ENCODE measurements at regions of chr11 and their contacts with region 1.

Region 1: DNA sequence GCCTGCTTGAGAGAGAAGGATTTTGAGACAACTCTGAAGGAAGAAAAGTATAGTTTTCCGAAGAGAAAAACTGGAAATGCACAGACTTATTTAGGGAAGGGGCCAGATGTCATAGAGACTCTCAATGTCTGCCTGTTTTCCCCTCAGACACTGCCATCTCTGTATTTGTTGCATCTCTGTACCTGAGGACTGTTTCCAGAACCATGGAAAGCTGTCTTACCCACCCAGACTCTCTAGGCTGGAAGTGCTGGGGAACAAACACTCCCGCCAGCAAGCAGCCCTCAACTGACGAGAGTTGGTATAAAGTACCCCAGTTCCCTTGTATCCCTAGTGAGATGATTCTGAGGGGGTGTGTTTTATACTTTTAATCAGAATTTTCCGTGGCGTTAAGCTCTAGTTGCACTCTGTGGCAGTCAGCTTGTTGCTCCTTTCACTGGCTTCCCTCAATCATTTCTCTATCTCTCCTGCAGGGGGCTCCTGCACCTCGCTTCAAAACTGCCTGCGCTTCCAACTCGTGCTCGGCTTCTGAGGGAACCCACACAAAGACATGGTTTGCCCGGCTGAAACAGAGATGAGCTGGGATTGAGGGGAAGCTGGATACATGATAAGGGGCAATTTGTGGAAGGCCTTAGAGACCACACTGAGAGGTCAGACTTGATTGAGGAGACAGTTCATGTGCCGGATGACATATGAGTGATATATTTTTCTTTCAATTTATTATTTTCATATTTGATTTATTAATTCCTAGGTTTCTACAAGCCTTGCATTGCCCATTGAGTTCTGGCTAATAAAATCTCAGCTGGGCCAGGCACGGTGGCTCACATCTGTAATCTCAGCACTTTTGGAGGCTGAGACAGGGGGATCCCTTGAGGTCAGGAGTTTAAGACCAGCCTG is 36.9 kb upstream of the CLPB start:
- DNase-seq: peak; percentile 84
- ATAC-seq: peak; percentile 98
- H3K4me3 ChIP-seq: no peak overlapping the region
- H3K27ac ChIP-seq: no peak overlapping the region
- H3K4me1 ChIP-seq: no peaks in the 10 kb centered on the region
- H3K27me3 ChIP-seq: peaks cover 33% of the 10 kb centered on the region
- CTCF ChIP-seq: peak; percentile 95

Region 2: DNA sequence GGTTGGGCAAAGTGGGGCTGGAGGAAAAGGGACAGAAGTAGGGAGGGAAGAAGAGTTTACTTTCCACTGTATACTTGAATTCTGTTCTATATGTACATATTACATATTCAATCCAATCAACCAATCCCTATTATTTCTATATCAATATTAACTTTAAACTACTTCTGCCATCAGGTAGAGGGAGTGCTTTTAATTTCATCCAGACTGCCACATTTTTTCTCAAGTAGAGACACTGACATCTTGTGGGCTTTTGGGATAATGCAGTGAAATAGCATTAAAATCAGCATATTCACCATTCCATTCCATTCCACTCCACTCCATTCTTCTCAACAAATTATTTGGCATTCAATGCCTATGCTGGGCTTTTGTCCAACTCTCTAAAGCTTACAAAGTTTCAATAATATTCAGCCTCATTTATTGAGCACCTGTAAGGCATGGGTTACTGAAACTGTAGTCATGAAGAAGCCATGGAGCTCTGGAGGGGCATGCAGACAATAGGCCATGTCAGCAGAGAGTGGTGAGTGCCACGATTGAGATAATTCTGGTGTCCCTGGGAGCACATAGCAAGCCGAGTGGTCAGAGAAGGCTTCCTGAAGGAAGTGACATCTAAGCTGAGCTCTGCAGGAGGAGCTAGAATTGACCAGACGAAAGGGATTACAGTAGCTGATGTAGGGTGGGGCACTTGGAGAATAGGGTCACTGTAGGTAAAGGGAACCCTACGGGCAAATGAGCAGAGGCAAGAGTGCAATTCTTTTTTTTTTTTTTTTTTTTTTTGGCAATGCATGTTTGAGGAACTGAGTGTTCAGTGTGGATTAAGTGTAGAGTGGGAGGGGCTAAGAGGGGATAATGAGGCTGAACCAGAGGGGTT is 24.1 kb before region 1 on chr11:
- CTCF ChIA-PET with region 1: interaction called, 11 read pairs
- POLR2A ChIA-PET with region 1: no interaction called
- intact Hi-C with region 1: no loop called
- DNase-seq: peak; percentile 83
- ATAC-seq: peak; percentile 76
- H3K4me3 ChIP-seq: no peak overlapping the region
- H3K27ac ChIP-seq: no peak overlapping the region
- H3K4me1 ChIP-seq: no peaks in the 10 kb centered on the region
- H3K27me3 ChIP-seq: no peaks in the 10 kb centered on the region
- CTCF ChIP-seq: peak; percentile 95

Region 3: GRCh38 chr11:72507050-72507449 is 35.8 kb after region 1 on chr11:
- CTCF ChIA-PET with region 1: no interaction called
- POLR2A ChIA-PET with region 1: no interaction called
- intact Hi-C with region 1: no loop called
- DNase-seq: no peak
- ATAC-seq: no peak
- H3K4me3 ChIP-seq: no peak overlapping the region
- H3K27ac ChIP-seq: no peak overlapping the region
- H3K4me1 ChIP-seq: no peaks in the 10 kb centered on the region
- H3K27me3 ChIP-seq: 0 out of 2 replicates have a peak, but pooled peaks cover 4% of the 10 kb centered on the region
- CTCF ChIP-seq: no peak

Region 4: DNA sequence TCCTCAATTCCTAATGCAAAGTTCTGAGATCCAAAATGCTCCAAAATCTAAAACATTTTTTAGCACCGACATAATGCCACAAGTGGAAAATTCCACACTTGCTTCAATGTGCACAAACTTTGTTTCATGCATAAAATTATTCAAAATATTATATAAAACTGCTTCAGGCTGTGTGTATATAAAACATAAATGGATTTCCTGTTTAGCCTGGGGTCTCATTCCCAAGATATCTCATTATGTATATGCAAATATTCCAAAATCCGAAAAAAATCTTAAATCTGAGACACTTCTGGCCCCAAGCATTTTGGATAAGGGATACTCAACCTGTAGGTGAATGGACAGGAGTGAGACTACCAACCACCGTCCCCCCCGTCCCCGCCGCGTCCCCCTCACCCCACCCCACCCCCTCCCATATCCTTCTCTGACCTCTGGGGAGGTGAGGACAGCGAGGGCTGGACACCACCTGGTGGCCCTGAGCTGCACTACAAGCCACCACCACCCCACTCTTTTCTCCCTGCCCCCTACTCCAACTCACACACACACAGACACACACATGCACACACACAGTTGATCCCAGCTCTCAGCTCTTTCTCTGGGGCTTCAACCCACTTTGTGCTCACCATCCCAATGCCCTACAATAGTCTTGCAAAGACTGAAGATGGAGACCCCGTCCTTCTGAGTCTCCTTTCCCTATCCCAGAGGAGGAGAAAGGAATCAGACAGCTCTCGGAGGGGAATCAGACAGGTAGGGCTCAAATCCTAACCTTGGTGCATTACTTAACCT is 102.0 kb after region 1 on chr11:
- CTCF ChIA-PET with region 1: interaction called, 39 read pairs
- POLR2A ChIA-PET with region 1: no interaction called
- intact Hi-C with region 1: loop called (anchors 1 kb)
- DNase-seq: peak; percentile 59
- ATAC-seq: peak; percentile 53
- H3K4me3 ChIP-seq: no peak overlapping the region
- H3K27ac ChIP-seq: no peak overlapping the region
- H3K4me1 ChIP-seq: peaks cover 25% of the 10 kb centered on the region
- H3K27me3 ChIP-seq: no peaks in the 10 kb centered on the region
- CTCF ChIP-seq: peak; percentile 68

Region 5: GRCh38 chr11:72642884-72643511 is 171.7 kb after region 1 on chr11:
- CTCF ChIA-PET with region 1: no interaction called
- POLR2A ChIA-PET with region 1: no interaction called
- intact Hi-C with region 1: loop called (anchors 2 kb)
- DNase-seq: peak; percentile 69
- ATAC-seq: peak; percentile 67
- H3K4me3 ChIP-seq: peak overlapping the region; percentile 72
- H3K27ac ChIP-seq: no peak overlapping the region
- H3K4me1 ChIP-seq: peaks cover 13% of the 10 kb centered on the region
- H3K27me3 ChIP-seq: peaks cover 18% of the 10 kb centered on the region
- CTCF ChIP-seq: peak; percentile 91

Region 6: GRCh38 chr11:72683782-72684200 is 212.5 kb after region 1 on chr11:
- CTCF ChIA-PET with region 1: interaction called, 7 read pairs
- POLR2A ChIA-PET with region 1: no interaction called
- intact Hi-C with region 1: loop called (anchors 5 kb)
- DNase-seq: peak; percentile 74
- ATAC-seq: peak; percentile 45
- H3K4me3 ChIP-seq: no peak overlapping the region
- H3K27ac ChIP-seq: no peak overlapping the region
- H3K4me1 ChIP-seq: no peaks in the 10 kb centered on the region; the same call in 1 of the 2 replicates
- H3K27me3 ChIP-seq: peaks cover 9% of the 10 kb centered on the region; the same call in 1 of the 2 replicates
- CTCF ChIP-seq: peak; percentile 98